ENCODE measurements at regions of chr19 and their contacts with region 1.

Region 1: GRCh38 chr19:41795031-41795461 is 1.3 kb upstream of the CEACAM3 start:
- H3K4me3 ChIP-seq: no peak overlapping the region
- H3K27ac ChIP-seq: no peak overlapping the region
- H3K4me1 ChIP-seq: no peaks in the 10 kb centered on the region
- CTCF ChIP-seq: peak; percentile 79

Region 2: GRCh38 chr19:41616792-41617621 is 178.0 kb before region 1 on chr19:
- CTCF ChIA-PET with region 1: no interaction called
- POLR2A ChIA-PET with region 1: no interaction called
- H3K4me3 ChIP-seq: no peak overlapping the region
- H3K27ac ChIP-seq: no peak overlapping the region
- H3K4me1 ChIP-seq: no peaks in the 10 kb centered on the region
- CTCF ChIP-seq: no peak

Region 3: DNA sequence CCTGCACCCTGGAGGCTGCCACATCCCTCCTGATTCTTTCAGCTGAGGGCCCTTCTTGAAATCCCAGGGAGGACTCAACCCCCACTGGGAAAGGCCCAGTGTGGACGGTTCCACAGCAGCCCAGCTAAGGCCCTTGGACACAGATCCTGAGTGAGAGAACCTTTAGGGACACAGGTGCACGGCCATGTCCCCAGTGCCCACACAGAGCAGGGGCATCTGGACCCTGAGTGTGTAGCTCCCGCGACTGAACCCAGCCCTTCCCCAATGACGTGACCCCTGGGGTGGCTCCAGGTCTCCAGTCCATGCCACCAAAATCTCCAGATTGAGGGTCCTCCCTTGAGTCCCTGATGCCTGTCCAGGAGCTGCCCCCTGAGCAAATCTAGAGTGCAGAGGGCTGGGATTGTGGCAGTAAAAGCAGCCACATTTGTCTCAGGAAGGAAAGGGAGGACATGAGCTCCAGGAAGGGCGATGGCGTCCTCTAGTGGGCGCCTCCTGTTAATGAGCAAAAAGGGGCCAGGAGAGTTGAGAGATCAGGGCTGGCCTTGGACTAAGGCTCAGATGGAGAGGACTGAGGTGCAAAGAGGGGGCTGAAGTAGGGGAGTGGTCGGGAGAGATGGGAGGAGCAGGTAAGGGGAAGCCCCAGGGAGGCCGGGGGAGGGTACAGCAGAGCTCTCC is 93.5 kb before region 1 on chr19:
- CTCF ChIA-PET with region 1: interaction called, 25 read pairs
- POLR2A ChIA-PET with region 1: no interaction called
- H3K4me3 ChIP-seq: no peak overlapping the region
- H3K27ac ChIP-seq: no peak overlapping the region
- H3K4me1 ChIP-seq: peaks cover 3% of the 10 kb centered on the region; the same call in 1 of the 2 replicates
- CTCF ChIP-seq: peak; percentile 62

Region 4: GRCh38 chr19:41775360-41775695 is 19.7 kb before region 1 on chr19:
- CTCF ChIA-PET with region 1: interaction called, 129 read pairs
- POLR2A ChIA-PET with region 1: no interaction called
- H3K4me3 ChIP-seq: no peak overlapping the region
- H3K27ac ChIP-seq: no peak overlapping the region
- H3K4me1 ChIP-seq: no peaks in the 10 kb centered on the region
- CTCF ChIP-seq: no peak

Region 5: GRCh38 chr19:41811036-41811435 is 16.0 kb after region 1 on chr19:
- CTCF ChIA-PET with region 1: interaction called, 202 read pairs
- POLR2A ChIA-PET with region 1: no interaction called
- H3K4me3 ChIP-seq: no peak overlapping the region
- H3K27ac ChIP-seq: no peak overlapping the region
- H3K4me1 ChIP-seq: no peaks in the 10 kb centered on the region
- CTCF ChIP-seq: no peak

Region 6: DNA sequence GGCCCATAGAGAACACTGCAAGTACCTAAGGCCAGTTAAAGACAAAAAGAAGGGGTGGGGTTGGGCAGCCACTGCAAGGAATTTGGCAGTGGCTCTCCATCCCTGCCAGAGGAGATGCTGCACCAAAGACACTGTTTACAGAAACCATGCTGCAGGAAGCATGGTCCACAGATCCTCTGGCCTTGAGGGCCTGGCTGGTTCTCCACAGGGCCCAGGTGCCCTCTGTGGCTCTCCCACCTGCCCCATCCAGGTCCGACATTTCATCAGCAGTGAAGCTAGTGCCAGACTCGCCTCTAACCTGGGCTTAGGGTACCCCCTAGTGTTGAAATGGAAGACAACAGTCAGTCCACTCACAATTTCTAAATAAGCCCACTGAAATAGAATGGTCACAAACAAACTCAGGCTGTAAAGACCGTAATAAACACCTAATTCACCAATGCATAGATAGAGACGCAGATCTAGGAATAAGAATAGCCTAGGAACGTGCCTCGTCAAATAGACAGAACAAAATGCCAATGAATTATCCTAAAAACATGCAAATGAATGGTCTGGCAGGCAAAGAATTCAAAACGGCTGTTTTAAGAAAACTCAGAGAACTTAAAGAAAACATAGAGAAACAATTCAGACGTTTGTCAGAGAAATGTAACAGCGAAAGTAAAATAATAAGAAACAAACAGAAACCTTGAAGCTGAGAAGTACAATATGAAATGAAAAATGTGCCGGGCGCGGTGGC is 26.1 kb after region 1 on chr19:
- CTCF ChIA-PET with region 1: interaction called, 202 read pairs
- POLR2A ChIA-PET with region 1: interaction called, 3 read pairs
- H3K4me3 ChIP-seq: no peak overlapping the region
- H3K27ac ChIP-seq: no peak overlapping the region
- H3K4me1 ChIP-seq: no peaks in the 10 kb centered on the region
- CTCF ChIP-seq: peak; percentile 86

Measured in HEK293 (cell line).